ENCODE measurements at regions of chr18 and their contacts with region 1.

Region 1: GRCh38 chr18:12645254-12646203 is 12.4 kb downstream of the SPIRE1 start:
- DNase-seq: peak; percentile 49
- ATAC-seq: peak; percentile 89 to 92

Region 2: DNA sequence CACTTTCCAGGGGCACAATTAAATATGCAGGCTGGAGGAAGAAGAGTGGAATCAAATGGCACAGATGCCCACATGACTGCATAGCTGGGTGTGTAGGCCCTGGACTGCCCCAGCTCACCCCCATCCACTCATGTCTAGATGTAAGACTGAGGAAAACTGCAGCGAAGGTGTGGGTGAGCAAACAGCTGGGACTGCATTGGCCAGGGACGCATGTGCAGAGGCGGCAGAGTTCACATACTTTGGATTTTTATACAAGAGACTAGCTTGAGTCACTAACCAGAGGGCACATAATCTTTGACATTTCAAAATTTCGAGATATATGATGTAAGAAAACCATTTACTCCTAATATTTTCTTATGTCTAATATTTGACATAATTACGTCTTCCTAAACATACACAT is 47.8 kb before region 1 on chr18:
- intact Hi-C with region 1: loop called in 1 of 2 experiments (anchors 10 kb)
- DNase-seq: peak; percentile 38
- ATAC-seq: peak; percentile 82 to 93

Region 3: GRCh38 chr18:12828116-12829051 is 182.9 kb after region 1 on chr18:
- intact Hi-C with region 1: no loop called
- DNase-seq: no peak
- ATAC-seq: no peak

Measured in left cardiac atrium (tissue), 4 donors.